ENCODE measurements at regions of chr19 and their contacts with region 1.

Region 1: DNA sequence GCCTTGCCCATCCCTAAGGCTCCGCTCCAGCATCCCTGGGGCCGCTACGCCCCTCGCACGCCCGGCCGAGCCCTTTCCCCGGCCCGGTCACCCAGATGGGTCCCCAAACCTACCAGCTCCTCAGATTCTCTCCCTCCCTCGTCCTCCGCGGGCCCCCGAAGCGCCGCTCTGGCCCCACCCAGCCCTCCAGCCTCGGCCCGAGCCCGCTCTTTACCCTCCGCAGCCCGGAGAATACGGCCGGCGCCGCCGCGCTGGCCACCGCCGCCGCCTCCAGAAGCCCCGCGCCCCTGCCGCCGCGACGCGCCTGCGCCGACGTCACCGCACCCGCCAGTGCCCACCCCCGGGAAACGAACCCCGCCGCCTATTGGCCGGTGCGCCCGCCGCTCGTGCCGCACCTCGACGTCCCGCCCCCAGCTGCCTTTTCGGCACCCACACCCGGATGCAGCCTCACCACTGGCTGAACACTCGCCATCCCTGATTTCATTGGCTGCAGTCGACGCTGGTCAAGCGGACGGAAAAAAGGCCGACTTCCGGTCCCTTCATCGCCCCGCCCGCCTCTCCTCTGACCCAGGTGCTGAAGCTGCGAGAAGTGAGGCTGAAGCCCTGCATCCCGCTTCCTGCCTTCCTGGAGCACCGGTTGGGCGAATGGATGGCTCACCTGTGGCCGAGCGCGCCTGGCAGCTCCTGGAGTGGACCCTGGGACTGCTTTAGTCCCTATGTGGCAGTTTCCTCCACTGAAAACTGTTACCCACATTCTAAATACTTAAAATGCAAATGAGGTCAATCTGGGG is at the start of gene DAPK3:
- H3K4me3 ChIP-seq: peak within 1 kb of the TSS; percentile 93
- H3K27ac ChIP-seq: peak within 1 kb of the TSS; percentile 90
- H3K4me1 ChIP-seq: peaks cover 17% of the 10 kb centered on the region
- CTCF ChIP-seq: no peak

Region 2: DNA sequence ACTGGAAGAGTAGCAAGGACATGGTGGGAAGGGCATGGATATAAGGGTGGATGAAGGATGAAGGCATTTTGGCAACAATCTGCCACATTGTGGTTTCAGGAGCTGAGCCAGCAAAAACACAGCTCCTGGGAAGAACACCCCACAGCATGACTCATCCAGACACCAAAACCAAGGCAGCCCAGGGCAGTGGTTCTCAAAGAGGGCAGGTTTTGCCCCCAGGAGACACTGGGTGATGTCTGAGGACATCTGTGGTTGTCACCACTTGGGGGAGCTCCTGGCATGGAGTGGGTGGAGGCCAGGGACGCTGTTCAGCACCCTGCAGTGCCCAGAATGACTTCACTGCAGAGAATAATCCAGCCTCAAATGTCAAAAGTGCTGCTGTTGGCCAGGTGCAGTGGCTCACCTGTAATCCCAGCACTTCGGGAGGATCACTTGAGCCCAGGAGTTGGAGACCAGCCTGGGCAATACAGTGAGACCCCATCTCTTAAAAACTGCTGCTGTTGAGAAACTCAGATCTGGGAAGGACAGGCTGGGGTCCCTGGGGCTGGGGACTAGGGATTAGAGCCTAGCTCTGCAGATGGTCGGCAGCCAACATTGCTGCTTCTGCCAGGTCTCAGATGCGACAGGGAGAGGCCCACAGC is 118.3 kb before region 1 on chr19:
- CTCF ChIA-PET with region 1: interaction called, 3 read pairs
- POLR2A ChIA-PET with region 1: interaction called, 13 read pairs
- H3K4me3 ChIP-seq: no peak overlapping the region
- H3K27ac ChIP-seq: no peak overlapping the region
- H3K4me1 ChIP-seq: no peaks in the 10 kb centered on the region
- CTCF ChIP-seq: no peak

Region 3: DNA sequence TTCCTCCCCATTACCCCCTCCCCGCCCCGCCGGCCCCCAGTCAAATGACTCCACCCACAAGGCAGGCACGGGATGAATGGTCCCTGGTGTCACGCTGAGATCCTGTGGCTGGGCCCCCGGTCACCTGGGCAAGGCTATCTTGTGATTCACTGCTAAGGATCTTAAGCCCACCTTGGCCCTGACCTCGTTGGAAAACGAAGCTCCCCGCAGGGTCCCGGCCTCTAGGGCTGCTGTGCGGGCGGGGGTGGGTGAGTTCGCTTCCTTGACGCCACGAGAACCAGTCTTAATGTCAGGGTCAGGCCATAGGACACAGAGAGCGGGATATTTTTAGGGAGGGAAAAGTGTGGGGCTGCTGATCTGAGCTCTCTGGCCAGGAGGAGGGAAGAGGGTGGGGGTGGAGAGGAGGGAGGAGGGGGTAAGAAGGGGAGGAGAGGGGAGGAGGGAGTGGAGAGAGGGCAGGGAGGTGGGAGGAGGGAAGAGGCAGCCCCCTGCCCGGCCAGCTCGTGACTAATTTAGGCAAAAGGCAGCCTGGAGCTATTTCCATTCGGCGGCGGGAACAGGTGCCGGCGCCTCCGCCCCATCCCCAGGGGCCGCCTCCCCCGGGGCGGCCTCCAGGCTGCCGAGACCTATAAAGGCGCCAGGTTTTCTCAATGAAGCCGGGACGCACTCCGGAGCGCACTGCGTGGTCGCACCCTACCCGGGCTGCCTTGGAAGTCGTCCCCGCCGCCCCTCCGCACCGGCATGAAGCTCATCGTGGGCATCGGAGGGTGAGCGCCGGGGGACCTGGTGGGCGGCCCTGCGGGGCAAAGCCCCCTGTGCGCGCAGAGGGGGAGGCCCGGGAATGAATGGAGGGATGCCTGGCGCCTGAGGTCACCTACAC is 37.8 kb before region 1 on chr19 and contains the start of gene NMRK2:
- CTCF ChIA-PET with region 1: interaction called, 4 read pairs
- POLR2A ChIA-PET with region 1: interaction called, 12 read pairs
- H3K4me3 ChIP-seq: peak within 1 kb of the TSS; percentile 15; the same call in 1 of the 2 replicates
- H3K27ac ChIP-seq: no peak within 1 kb of the TSS
- H3K4me1 ChIP-seq: no peaks in the 10 kb centered on the region
- CTCF ChIP-seq: no peak

Region 4: DNA sequence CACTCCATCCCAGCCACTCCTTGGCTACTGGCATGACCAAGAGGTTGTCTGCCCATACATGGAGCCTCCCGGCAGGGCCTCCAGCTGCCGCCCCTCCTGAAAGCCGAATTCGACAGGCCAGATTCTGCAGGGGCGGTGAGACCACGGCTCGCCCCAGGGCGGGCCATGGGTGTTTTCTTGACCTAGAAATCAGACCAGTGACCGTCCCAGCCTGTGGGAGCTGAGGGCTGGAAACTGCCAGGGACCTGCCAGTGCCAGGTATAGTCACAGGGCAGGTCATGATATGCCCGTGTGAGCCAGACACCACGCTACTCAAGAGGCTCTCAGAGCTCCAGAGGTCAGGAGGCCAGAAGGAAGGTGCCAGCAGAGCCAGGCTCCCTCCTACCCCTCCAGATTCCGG is 16.9 kb before region 1 on chr19:
- CTCF ChIA-PET with region 1: interaction called, 3 read pairs
- POLR2A ChIA-PET with region 1: interaction called, 20 read pairs
- H3K4me3 ChIP-seq: no peak overlapping the region
- H3K27ac ChIP-seq: no peak overlapping the region
- H3K4me1 ChIP-seq: no peaks in the 10 kb centered on the region
- CTCF ChIP-seq: no peak

Region 5: DNA sequence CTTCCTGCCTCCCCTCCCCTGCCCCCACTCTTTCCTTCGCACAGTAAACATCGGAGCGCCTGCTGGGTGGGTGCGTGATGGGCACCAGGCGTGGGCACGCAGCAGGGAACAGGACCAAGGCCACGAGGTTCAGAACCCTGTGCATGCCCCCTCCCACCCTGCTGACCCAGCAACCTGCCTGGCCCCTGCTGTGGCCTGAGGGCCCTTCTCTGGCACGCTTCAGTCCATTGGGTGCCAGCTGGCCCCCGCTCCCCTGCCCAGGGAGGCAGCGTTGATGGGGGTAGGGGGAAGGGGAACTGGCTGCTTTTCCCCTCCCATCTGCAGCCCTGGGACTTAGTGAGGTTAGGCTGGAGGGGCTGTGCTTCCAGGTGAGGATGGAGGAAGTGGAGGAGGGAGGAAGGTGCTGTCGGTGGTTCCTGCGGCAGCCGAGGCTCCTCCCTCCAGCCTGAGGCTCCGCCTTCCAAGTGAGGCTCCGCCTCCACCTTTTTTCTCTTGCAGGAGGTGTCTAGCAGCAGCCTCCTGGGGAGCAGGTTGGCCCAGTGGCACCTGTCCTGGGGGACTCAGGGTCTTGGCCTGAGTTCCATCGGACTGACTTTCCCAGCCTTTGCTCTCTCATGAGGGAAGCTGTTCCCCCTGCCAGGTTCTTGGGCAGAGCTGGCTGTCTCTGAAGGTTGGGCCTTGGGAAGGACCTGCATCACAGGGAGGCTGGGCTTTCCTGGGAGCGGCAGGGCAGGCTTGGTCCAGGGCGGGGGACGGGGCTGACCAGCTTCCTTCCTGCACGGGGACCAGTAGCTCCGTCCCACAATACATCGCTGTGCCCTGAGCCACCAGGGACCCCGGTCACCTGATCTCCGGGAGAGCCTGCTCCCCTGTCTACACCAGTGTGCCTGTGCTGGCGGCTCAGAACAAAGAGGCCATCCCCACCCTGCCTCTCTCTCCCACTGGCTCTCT is 43.8 kb after region 1 on chr19:
- CTCF ChIA-PET with region 1: no interaction called
- POLR2A ChIA-PET with region 1: no interaction called
- H3K4me3 ChIP-seq: no peak overlapping the region
- H3K27ac ChIP-seq: no peak overlapping the region
- H3K4me1 ChIP-seq: no peaks in the 10 kb centered on the region
- CTCF ChIP-seq: no peak

Measured in HEK293 (cell line).